Naive thymus-derived CD4-positive, alpha-beta T cell (primary cell): ENCODE measurements at regions of chr9 and their contacts with region 1.

Region 1: GRCh38 chr9:127955294-127956035 is 17.8 kb upstream of the DPM2 start:
- DNase-seq: peak in 8 of 9 donors; percentile 64 to 86 (median 70)
- ATAC-seq: peak; percentile 93
- H3K4me3 ChIP-seq: peak overlapping the region; percentile 41
- H3K4me3 Mint-ChIP-seq: peak overlapping the region; percentile 74 to 92 (median 82)
- H3K27ac ChIP-seq: peak overlapping the region; percentile 84
- H3K27ac Mint-ChIP-seq: peak overlapping the region; percentile 66 to 98 (median 93)
- H3K4me1 ChIP-seq: peaks cover 72 to 91% of the 10 kb centered on the region in 2 donors
- H3K4me1 Mint-ChIP-seq: peaks cover 65 to 96% (median 84%) of the 10 kb centered on the region in 7 donors
- H3K27me3 ChIP-seq: no peaks in the 10 kb centered on the region
- H3K27me3 Mint-ChIP-seq: no peaks in the 10 kb centered on the region

Region 2: DNA sequence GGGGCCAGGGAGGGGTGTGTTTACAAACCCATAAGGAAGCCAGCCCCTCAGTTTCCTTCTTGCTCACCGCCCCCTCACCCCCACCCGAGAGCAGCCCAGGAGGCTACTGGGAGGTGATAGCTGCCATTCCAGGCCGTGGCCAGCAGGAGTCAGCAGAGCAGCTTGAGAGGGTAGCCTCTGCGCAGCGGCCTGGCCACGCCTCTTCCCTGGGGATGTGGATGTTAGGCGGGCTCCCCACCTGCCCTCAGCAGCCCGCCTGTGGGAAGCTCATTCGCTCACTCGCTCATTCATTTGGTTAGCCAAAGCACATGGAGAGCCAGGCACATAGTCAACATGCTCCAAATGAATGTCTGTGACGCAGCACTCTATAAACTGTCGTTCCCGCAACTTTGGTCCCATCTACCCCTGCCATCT is 11.7 kb before region 1 on chr9:
- CTCF ChIA-PET with region 1: interaction called, 37 read pairs
- POLR2A ChIA-PET with region 1: interaction called, 1,719 read pairs
- intact Hi-C with region 1: no loop called
- DNase-seq: peak; percentile 57 to 79 (median 72)
- ATAC-seq: peak; percentile 90
- H3K4me3 ChIP-seq: no peak overlapping the region
- H3K4me3 Mint-ChIP-seq: peak overlapping the region in 5 of 10 donors; percentile 7 to 47 (median 25)
- H3K27ac ChIP-seq: peak overlapping the region; percentile 22
- H3K27ac Mint-ChIP-seq: peak overlapping the region; percentile 70 to 97 (median 88)
- H3K4me1 ChIP-seq: peaks cover 4 to 12% of the 10 kb centered on the region in 2 donors
- H3K4me1 Mint-ChIP-seq: peaks cover 21 to 58% (median 42%) of the 10 kb centered on the region in 7 donors
- H3K27me3 ChIP-seq: no peaks in the 10 kb centered on the region
- H3K27me3 Mint-ChIP-seq: no peaks in the 10 kb centered on the region

Region 3: GRCh38 chr9:127980706-127981558 is 25.5 kb after region 1 on chr9 and contains the start of gene EEIG1:
- CTCF ChIA-PET with region 1: interaction called, 55 read pairs
- POLR2A ChIA-PET with region 1: interaction called, 1,719 read pairs
- intact Hi-C with region 1: loop called in 1 of 2 experiments (anchors 1 kb)
- DNase-seq: peak; percentile 95 to 100 (median 99)
- ATAC-seq: peak; percentile 96
- H3K4me3 ChIP-seq: peak within 1 kb of the TSS; percentile 93
- H3K4me3 Mint-ChIP-seq: peak within 1 kb of the TSS; percentile 93 to 99 (median 98)
- H3K27ac ChIP-seq: peak within 1 kb of the TSS; percentile 84
- H3K27ac Mint-ChIP-seq: peak within 1 kb of the TSS; percentile 92 to 100 (median 98)
- H3K4me1 ChIP-seq: peaks cover 25 to 38% of the 10 kb centered on the region in 2 donors
- H3K4me1 Mint-ChIP-seq: peaks cover 35 to 47% (median 42%) of the 10 kb centered on the region in 7 donors
- H3K27me3 ChIP-seq: no peaks in the 10 kb centered on the region
- H3K27me3 Mint-ChIP-seq: no peaks in the 10 kb centered on the region
- total RNA-seq, gene EEIG1: 252 to 664 (median 347) TPM

Region 4: DNA sequence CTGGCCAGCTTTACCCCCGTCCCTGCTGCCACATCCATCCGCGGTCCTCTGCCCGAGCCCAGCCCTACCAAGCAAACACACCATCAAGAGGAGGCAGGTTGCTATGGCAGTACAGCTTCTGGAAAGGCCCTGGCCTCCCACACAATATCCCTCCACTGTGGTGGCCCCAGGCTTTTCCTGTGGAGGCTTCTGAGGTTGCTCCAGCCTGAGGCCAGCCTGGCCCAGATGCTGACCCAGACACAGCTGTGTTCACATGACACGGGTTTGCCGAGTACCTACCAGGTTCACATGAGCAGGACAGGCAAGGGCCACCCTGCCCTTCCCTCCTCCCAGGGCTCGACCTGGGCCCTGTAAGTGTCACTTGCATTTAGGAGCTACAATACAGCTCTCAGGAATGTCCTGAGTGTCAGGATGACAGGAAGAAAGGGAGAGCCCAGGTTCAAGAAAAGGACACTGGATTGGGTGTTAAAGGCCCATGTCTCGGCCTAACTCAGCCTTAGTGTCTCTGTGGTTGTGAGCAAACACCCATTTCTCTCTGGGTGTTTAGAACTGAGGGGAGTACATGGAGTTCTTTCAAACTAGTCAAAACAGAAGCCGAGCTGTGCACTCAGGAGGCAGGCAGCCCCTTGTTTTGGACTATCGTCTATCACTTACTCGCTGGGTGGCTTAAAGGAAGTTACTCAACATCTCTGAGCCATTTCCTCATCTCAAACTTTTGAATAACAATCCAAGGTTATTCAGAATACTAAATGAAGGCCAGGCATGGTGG is 71.5 kb after region 1 on chr9:
- CTCF ChIA-PET with region 1: interaction called, 253 read pairs
- POLR2A ChIA-PET with region 1: interaction called, 1,511 read pairs
- intact Hi-C with region 1: loop called in 1 of 2 experiments (anchors 2 kb)
- DNase-seq: peak in 8 of 9 donors; percentile 42 to 78 (median 62)
- ATAC-seq: peak; percentile 10
- H3K4me3 ChIP-seq: peak overlapping the region; percentile 52
- H3K4me3 Mint-ChIP-seq: peak overlapping the region; percentile 76 to 91 (median 85)
- H3K27ac ChIP-seq: peak overlapping the region; percentile 96
- H3K27ac Mint-ChIP-seq: peak overlapping the region; percentile 92 to 100 (median 98)
- H3K4me1 ChIP-seq: peaks cover 87 to 88% of the 10 kb centered on the region in 2 donors
- H3K4me1 Mint-ChIP-seq: peaks cover 44 to 94% (median 89%) of the 10 kb centered on the region in 7 donors
- H3K27me3 ChIP-seq: no peaks in the 10 kb centered on the region
- H3K27me3 Mint-ChIP-seq: no peaks in the 10 kb centered on the region

Region 5: DNA sequence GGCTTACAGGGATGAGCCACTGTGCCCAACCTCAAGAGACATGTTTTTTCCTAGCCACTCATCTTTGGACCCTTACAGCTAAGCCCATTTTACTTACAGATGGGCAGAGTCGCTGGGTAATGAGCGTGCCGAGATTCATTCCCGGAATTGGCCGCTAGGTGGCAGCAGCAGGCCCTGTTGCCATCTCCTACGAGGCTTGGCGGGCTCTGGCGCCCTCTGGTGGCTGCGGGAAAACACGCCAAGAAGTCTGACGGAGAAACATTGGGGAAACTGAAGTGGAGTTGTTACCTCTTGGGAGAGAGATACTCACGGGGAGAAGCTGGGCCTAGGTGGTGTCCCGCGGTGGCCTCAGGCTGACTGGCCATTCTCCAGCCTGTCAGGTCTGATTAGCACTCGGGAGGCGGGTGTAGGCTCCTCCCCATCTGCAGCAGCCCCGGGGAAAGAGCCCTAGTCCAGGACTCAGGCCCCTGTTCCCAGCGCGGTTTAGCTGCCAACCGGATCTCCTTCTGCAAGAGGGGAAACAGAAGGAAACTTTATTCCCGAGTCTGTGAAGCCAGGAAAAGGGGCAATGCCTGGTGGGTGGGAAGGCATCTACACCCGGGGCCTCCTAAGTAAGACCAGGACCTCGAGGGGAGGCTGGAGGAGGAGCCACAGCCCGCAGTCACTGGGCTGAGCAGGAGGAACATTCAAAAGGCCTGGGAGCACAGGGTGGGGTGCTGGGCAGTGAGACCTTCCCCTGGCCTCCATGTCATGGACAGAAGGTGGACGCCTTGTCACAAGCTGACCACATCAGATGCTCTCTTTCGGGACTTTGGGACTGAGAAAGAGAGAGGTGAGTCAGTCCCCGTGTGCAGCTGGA is 162.4 kb after region 1 on chr9:
- CTCF ChIA-PET with region 1: interaction called, 3 read pairs
- POLR2A ChIA-PET with region 1: no interaction called
- intact Hi-C with region 1: loop called in 1 of 2 experiments (anchors 1 kb)
- DNase-seq: peak; percentile 82 to 99 (median 92)
- ATAC-seq: peak; percentile 97
- H3K4me3 ChIP-seq: no peak overlapping the region
- H3K4me3 Mint-ChIP-seq: peak overlapping the region in 4 of 10 donors; percentile 3 to 59 (median 36)
- H3K27ac ChIP-seq: no peak overlapping the region
- H3K27ac Mint-ChIP-seq: peak overlapping the region in 8 of 9 donors; percentile 11 to 88 (median 60)
- H3K4me1 ChIP-seq: peaks cover 0 to 7% of the 10 kb centered on the region in 2 donors
- H3K4me1 Mint-ChIP-seq: peaks cover 6 to 13% (median 7%) of the 10 kb centered on the region in 7 donors
- H3K27me3 ChIP-seq: no peaks in the 10 kb centered on the region
- H3K27me3 Mint-ChIP-seq: no peaks in the 10 kb centered on the region

Region 6: DNA sequence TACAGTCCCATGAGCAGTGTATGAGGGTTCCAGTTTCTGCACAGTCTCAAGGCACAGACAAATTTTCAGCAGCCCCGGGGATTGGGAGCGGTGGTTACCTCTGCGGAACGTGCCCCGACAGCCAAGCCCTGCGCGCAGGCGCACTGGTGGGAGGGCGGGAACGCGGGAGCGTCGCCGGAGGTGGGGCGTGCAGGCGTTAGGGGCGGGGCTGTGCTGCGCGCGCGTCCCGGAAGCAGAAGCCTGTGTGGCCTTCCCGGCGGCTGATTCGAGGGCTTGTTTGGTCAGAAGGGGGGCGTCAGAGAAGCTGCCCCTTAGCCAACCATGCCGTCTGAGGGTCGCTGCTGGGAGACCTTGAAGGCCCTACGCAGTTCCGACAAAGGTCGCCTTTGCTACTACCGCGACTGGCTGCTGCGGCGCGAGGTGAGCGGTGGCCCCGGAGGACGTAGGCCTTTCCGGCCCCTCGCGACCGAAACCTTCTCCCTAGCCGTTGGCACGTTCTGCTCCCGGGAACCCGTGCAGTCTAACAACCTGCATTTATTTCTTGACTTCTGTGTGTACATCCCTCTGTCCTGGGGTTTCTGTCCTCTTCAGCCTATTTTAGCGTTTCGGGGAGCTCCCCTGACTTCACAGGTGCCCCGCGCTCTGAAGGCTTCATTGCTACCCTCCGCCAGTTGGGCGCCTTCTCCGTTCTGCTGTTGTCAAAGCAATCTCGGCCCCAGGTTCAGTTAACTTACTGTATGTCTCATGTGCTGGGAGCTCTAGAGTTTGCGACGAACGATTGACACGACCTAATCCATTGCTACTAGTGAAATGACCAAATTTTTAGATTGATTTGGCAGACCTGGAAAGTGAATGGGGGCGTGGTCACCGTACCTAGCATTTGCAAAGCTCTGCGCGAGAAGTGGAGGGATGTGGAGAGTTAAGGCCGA is 549.3 kb after region 1 on chr9 and contains the start of gene GLE1:
- CTCF ChIA-PET with region 1: no interaction called
- POLR2A ChIA-PET with region 1: no interaction called
- intact Hi-C with region 1: no loop called
- DNase-seq: peak; percentile 93 to 99 (median 97)
- ATAC-seq: peak; percentile 98
- H3K4me3 ChIP-seq: peak within 1 kb of the TSS; percentile 97
- H3K4me3 Mint-ChIP-seq: peak within 1 kb of the TSS; percentile 92 to 100 (median 99)
- H3K27ac ChIP-seq: peak within 1 kb of the TSS; percentile 92
- H3K27ac Mint-ChIP-seq: peak within 1 kb of the TSS; percentile 82 to 100 (median 99)
- H3K4me1 ChIP-seq: peaks cover 8 to 11% of the 10 kb centered on the region in 2 donors
- H3K4me1 Mint-ChIP-seq: peaks cover 0 to 38% (median 34%) of the 10 kb centered on the region in 7 donors
- H3K27me3 ChIP-seq: no peaks in the 10 kb centered on the region
- H3K27me3 Mint-ChIP-seq: no peaks in the 10 kb centered on the region
- total RNA-seq, gene GLE1: 14.2 to 46.5 (median 30.5) TPM